ENCODE measurements at regions of chr2 and their contacts with region 1.

Region 1: GRCh38 chr2:98160554-98160953 is 73.6 kb downstream of the VWA3B start:
- DNase-seq: no peak

Region 2: DNA sequence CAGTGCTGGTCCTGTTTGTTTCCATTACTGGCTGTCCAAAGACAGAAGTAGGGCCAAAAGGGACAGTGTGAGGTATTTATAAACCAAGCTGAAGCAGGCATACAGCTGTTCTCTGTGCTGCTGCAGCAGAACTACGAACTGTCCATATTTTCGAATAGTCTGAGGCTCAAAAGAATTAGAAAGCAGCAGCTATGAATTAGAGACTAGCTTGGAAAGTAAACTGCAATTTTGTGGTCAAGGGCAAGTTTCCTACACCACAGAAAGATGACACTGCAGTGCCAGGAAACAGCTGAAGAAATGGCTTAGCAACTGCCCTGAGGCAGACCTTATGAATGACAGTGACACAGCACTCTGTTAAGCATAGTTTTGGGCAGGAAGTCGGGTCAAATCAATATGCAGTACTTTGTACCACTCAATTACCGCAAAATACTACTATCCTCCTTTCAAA is 290.1 kb before region 1 on chr2:
- intact Hi-C with region 1: loop called (anchors 5 kb)
- DNase-seq: no peak

Region 3: DNA sequence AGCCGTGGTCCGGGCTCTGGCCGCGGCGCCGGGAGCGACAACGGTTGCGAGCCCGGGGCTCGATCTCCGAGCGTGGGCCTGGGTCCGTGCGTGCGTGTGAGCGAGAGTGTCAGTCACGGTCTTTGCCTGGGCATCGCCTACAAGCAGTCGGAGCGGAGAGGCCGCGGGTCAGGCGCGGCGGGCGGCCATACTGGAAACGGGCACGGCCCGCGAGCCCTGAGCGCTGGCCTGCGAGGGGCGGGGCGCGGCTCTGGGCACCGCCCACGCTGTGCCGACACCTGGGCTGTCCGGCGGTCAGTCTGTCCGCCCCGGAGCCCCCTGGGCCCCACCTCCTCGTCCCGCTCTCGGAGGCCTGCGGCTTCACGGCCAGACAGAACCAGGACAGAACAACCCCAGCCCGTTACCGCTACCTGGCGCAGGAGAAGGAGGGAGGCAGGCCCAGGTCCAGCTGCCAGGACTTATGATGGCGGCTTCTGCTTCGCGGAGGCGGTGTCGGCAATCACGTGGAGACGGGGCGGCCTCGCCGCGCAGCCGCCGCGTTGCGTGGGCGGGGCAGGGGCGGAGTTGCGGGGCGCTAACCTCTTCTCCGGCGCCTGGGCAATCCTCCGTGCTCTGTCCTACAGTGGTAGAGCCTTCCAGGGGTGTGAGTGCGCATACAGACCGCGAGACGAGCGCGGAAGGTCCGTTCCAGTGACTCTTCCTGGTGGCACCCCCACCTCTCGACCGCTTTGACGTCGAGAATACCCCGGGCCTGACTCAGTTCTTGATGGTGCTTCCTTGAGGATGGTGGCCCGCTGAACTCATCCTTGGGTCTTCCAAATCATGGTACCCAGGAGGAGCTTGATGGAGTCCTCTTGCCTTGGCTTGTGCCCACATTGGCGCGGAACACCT is 164.6 kb before region 1 on chr2 and contains the start of gene TMEM131:
- intact Hi-C with region 1: loop called (anchors 10 kb)
- DNase-seq: peak; percentile 98
- total RNA-seq, gene TMEM131: 28.6 TPM

Region 4: GRCh38 chr2:98012561-98012991 is 148.0 kb before region 1 on chr2:
- intact Hi-C with region 1: no loop called
- DNase-seq: no peak

Measured in cardiac septum (tissue), 1 donor.